Head of caudate nucleus (tissue), 42 donors: ENCODE measurements at regions of chr11 and their contacts with region 1.

Region 1: DNA sequence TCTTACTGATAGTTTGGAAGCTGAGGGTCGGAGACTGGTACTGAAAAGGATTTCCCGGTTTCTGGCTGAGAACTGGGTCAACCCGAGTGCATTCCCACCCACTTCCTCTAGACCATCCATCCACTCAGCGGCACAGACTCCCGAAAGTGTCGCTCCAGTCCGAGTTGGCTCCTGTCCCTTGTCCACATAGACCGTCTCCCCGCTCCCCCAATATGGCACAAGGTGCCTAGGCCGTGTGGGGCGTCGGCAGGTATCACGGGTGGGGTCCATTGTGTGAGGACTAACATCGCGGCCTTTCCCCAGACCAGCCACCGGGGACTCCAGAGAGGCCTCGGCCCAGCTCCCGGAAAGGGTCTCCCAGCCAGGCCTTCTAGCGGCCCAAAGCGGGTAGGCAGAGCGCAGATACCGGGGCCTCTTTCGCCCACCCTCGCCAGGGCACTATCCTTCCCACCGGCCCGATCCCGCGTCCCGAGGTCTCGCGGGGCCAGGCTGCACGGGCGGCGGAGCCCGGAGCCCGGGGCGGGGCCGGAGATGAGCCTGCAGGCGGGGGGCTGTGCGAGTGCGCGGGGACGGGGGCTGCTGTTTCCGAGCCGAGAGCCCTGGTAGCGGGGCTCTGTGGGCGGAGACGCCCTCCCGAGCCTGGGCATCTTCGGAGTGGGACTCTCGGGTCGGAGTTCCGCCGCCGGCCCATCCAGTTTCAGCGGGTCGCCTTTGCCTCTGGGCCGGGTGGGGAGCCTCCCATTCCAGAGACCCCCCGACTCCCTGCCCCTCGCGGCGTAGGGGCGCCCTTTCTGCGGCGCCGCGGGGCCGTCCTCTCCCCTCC is 21.1 kb downstream of the SERPINH1 start:
- DNase-seq: peak; percentile 12 to 84 (median 67)

Region 2: GRCh38 chr11:75547580-75548058 is 35.5 kb before region 1 on chr11:
- intact Hi-C with region 1: loop called (anchors 5 kb)
- DNase-seq: peak in 40 of 42 donors; percentile 38 to 88 (median 66)

Region 3: GRCh38 chr11:75667831-75668450 is 84.8 kb after region 1 on chr11:
- intact Hi-C with region 1: loop called (anchors 5 kb)
- DNase-seq: peak; percentile 43 to 93 (median 85)